IMR-90 (cell line): ENCODE measurements at regions of chr16 and their contacts with region 1.

Region 1: GRCh38 chr16:31458844-31459721 is at the start of gene ARMC5:
- DNase-seq: peak; percentile 99
- ATAC-seq: peak; percentile 85
- H3K4me3 ChIP-seq: peak within 1 kb of the TSS; percentile 55
- H3K27ac ChIP-seq: peak within 1 kb of the TSS; percentile 90
- H3K4me1 ChIP-seq: peaks cover 11% of the 10 kb centered on the region
- H3K27me3 ChIP-seq: no peaks in the 10 kb centered on the region
- CTCF ChIP-seq: peak; percentile 51
- POLR2A ChIP-seq: peak; percentile 92
- RAD21 ChIP-seq: peak; percentile 39
- total RNA-seq, gene ARMC5: 2.3 and 3.1 TPM in 2 replicates

Region 2: DNA sequence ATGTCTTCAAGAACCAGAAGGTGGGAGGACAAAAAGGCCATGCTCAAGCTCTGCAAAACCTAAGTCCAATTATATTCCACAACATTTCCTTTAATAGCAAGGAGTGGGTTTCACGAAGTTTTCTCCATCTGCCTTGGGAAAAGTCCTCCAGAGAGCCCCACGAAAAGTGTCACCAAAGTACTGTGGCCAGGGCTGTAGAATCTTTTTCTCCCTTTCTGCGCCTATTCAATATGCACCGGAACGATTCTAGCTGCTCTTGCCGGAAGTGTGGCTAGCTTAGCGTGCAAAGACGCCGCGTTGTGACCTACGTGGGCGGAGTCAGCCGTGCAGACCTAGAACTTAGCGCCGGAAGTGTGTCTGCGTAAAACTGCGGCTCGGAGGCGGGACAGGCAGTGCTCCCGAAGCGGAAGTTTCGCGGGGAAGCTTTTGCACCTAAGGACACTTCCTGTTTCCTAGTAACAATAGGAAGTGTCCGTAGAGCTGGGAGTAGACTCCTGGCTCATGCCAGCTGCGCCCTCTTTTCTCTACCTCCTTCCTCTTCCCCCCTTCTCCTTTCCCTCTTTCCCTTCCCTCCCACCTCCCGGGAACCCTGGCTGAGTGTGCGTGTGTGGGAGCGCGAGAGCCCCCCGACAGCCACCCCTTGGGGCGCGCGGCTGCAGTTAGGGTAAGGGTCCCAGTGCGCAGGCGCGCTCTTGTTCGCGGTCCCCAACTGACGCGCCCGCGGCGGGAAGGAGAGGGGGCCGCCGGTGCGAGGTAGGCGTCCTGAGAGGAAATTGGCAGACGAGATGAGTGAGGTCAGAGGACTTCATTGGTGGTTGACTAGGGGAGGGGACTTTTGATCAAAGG is 384.9 kb before region 1 on chr16 and contains the starts of genes ZNF646 and ZNF668:
- CTCF ChIA-PET with region 1: no interaction called
- POLR2A ChIA-PET with region 1: no interaction called
- dilution Hi-C with region 1: no loop called
- in situ Hi-C with region 1: loop called (anchors 10 kb)
- intact Hi-C with region 1: no loop called
- DNase-seq: peak; percentile 100
- ATAC-seq: peak; percentile 76
- H3K4me3 ChIP-seq: peak within 1 kb of the TSS; percentile 81
- H3K27ac ChIP-seq: peak within 1 kb of the TSS; percentile 90
- H3K4me1 ChIP-seq: peaks cover 6% of the 10 kb centered on the region
- H3K27me3 ChIP-seq: no peaks in the 10 kb centered on the region
- CTCF ChIP-seq: no peak
- POLR2A ChIP-seq: peak; percentile 72
- RAD21 ChIP-seq: no peak; the same call in 1 of the 2 replicates
- total RNA-seq, gene ZNF646: 6.8 and 6.9 TPM in 2 replicates
- total RNA-seq, gene ZNF668: 4.5 and 5.3 TPM in 2 replicates

Region 3: GRCh38 chr16:31472709-31473203 is 13.7 kb after region 1 on chr16:
- CTCF ChIA-PET with region 1: interaction called, 7 read pairs
- POLR2A ChIA-PET with region 1: interaction called, 16 read pairs
- dilution Hi-C with region 1: no loop called
- in situ Hi-C with region 1: no loop called
- intact Hi-C with region 1: loop called (anchors 1 kb)
- DNase-seq: peak; percentile 88
- ATAC-seq: peak; percentile 72
- H3K4me3 ChIP-seq: peak overlapping the region; percentile 87
- H3K27ac ChIP-seq: peak overlapping the region; percentile 100
- H3K4me1 ChIP-seq: peaks cover 13% of the 10 kb centered on the region
- H3K27me3 ChIP-seq: no peaks in the 10 kb centered on the region
- CTCF ChIP-seq: peak; percentile 73
- POLR2A ChIP-seq: peak; percentile 57; the same call in 1 of the 2 replicates
- RAD21 ChIP-seq: peak; percentile 19; the same call in 1 of the 2 replicates

Region 4: GRCh38 chr16:31868691-31869167 is 409.6 kb after region 1 on chr16:
- CTCF ChIA-PET with region 1: no interaction called
- POLR2A ChIA-PET with region 1: interaction called, 5 read pairs
- dilution Hi-C with region 1: no loop called
- in situ Hi-C with region 1: loop called (anchors 25 kb)
- intact Hi-C with region 1: loop called (anchors 2 kb)
- DNase-seq: peak; percentile 72
- ATAC-seq: peak; percentile 79
- H3K4me3 ChIP-seq: no peak overlapping the region
- H3K27ac ChIP-seq: no peak overlapping the region
- H3K4me1 ChIP-seq: peaks cover 6% of the 10 kb centered on the region
- H3K27me3 ChIP-seq: peaks cover 12% of the 10 kb centered on the region
- CTCF ChIP-seq: peak; percentile 76
- POLR2A ChIP-seq: no peak
- RAD21 ChIP-seq: peak; percentile 74

Region 5: DNA sequence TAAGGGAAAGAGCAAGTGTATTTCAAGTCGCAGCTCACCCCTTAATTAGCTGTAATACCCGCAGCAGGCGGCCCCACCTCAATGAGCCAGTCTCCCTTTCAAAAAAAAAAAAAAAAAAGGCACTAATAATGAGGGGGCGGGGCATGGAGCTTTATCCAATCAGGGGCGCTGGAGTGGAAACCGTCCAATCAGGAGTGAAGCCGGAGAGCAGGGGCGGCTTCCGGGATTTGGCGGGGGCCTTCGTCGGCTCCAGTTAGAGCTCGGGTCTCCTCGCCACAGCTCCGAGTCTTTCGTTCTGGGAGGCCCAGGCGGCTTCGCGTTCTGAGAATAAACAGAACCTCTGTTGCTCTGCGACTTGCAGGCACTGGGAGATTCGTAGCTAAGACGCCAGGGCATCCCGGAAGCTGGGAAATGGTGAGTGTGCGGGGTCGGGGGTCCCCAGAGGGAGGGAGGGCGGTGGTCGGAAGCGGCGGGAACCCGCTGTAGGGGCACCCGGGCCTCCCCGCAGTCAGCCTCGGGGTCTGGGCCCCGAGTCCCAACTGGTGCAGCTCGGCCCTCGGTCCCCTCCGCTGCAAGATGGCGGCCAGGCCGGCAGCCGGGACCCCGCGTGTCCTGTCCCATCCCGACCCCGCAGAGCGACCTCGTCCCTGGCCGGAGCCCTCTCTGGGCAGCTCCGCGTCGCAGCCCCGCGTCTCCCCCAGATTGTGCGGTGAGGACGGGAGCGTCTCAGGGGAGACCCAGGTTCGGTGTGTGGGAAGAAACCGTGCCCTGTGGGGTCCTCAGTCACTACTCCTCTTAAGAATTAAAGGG is 414.7 kb after region 1 on chr16 and contains the start of gene ZNF267:
- CTCF ChIA-PET with region 1: no interaction called
- POLR2A ChIA-PET with region 1: interaction called, 3 read pairs
- dilution Hi-C with region 1: no loop called
- in situ Hi-C with region 1: loop called (anchors 25 kb)
- intact Hi-C with region 1: loop called (anchors 2 kb)
- DNase-seq: peak; percentile 86
- ATAC-seq: peak; percentile 89
- H3K4me3 ChIP-seq: peak within 1 kb of the TSS; percentile 73
- H3K27ac ChIP-seq: peak within 1 kb of the TSS; percentile 58
- H3K4me1 ChIP-seq: peaks cover 20% of the 10 kb centered on the region
- H3K27me3 ChIP-seq: no peaks in the 10 kb centered on the region
- CTCF ChIP-seq: no peak
- POLR2A ChIP-seq: peak; percentile 95
- RAD21 ChIP-seq: no peak
- total RNA-seq, gene ZNF267: 15.6 and 22.2 TPM in 2 replicates